Activated CD4-positive, alpha-beta memory T cell treated with anti-CD3 and anti-CD28 coated beads for 36 hours (primary cell): ENCODE measurements at regions of chr18 and their contacts with region 1.

Region 1: GRCh38 chr18:57434536-57435494 is at the start of gene ONECUT2:
- DNase-seq: peak; percentile 83
- H3K4me3 Mint-ChIP-seq: peak within 1 kb of the TSS; percentile 48
- H3K27ac Mint-ChIP-seq: peak within 1 kb of the TSS; percentile 42
- H3K4me1 Mint-ChIP-seq: peaks cover 49% of the 10 kb centered on the region
- H3K27me3 Mint-ChIP-seq: peaks cover 81% of the 10 kb centered on the region
- total RNA-seq, gene ONECUT2: 0.02 TPM in 1 of 2 experiments, not detected in the other

Region 2: DNA sequence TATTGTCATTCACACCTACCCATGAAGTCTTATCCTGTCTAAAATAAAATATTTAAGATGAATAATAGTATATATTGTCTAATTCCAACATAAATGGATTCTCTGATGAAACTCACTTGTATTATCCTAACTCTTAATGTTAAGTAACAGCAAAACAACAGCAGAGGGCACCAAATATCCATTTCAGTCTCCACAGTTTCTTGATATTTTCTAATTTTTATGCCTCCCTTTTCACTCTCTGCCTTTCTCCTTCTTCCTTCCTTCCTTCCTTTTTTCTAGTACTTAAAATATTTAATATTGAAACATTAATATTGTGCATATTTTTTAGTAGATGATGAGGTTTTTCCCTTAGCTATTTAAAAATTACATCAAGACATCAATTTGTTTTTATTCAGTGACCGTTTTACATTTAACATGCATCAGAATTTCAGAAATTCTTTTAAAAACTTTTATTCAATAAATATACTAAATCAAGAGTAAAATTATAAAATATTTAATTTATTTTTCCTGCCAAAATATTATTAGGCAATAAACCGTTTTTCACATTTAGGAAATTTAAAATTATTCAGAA is 686.0 kb before region 1 on chr18:
- CTCF ChIA-PET with region 1: interaction called, 3 read pairs
- POLR2A ChIA-PET with region 1: no interaction called
- intact Hi-C with region 1: loop called (anchors 5 kb)
- DNase-seq: no peak
- H3K4me3 Mint-ChIP-seq: no peak overlapping the region
- H3K27ac Mint-ChIP-seq: no peak overlapping the region
- H3K4me1 Mint-ChIP-seq: peaks cover 26% of the 10 kb centered on the region
- H3K27me3 Mint-ChIP-seq: no peaks in the 10 kb centered on the region

Region 3: DNA sequence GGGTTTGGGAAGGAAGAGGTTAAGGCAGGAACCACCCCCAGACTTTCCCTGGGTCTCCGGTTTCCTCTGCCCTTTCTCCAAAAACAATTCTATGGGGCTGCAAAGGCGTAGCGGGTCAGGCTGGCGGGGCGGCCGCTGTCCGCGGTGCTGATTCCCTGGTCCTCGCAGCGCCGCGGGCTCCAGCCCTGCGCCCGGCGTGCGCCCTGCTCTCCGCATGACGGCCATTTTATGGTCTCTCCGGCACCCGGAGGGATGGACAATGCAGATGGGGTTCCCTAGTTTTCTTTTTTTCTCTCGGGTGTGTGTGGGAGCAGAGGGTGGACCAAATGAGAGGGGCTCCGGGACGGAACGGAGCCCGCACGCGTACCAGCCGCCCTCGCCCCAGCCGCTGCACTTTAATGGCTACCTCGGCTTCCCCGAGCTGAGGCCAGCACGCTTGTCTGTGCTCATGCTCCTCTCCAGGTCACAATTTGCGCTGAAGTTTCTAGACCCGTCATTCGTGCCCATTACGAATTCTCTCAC is 80.8 kb before region 1 on chr18:
- CTCF ChIA-PET with region 1: no interaction called
- POLR2A ChIA-PET with region 1: no interaction called
- intact Hi-C with region 1: loop called (anchors 5 kb)
- DNase-seq: peak; percentile 19
- H3K4me3 Mint-ChIP-seq: no peak overlapping the region
- H3K27ac Mint-ChIP-seq: no peak overlapping the region
- H3K4me1 Mint-ChIP-seq: no peaks in the 10 kb centered on the region
- H3K27me3 Mint-ChIP-seq: peaks cover 36% of the 10 kb centered on the region

Region 4: GRCh38 chr18:57586251-57587049 is 151.6 kb after region 1 on chr18 and contains the start of gene FECH:
- CTCF ChIA-PET with region 1: no interaction called
- POLR2A ChIA-PET with region 1: no interaction called
- intact Hi-C with region 1: no loop called
- DNase-seq: peak; percentile 70
- H3K4me3 Mint-ChIP-seq: peak within 1 kb of the TSS; percentile 82
- H3K27ac Mint-ChIP-seq: peak within 1 kb of the TSS; percentile 45
- H3K4me1 Mint-ChIP-seq: peaks cover 14% of the 10 kb centered on the region
- H3K27me3 Mint-ChIP-seq: no peaks in the 10 kb centered on the region
- total RNA-seq, gene FECH: 17.5 to 20.2 TPM